Gastrocnemius medialis (tissue), 4 donors: ENCODE measurements at regions of chr3 and their contacts with region 1.

Region 1: GRCh38 chr3:136075218-136075808 is 109.8 kb downstream of the PPP2R3A start:
- DNase-seq: peak; percentile 55 to 73
- ATAC-seq: peak; percentile 82 to 86
- H3K4me3 ChIP-seq: peak overlapping the region in 2 of 4 donors; percentile 10
- H3K27ac ChIP-seq: peak overlapping the region; percentile 69 to 81 (median 78)
- H3K4me1 ChIP-seq: peaks cover 22 to 42% of the 10 kb centered on the region in 2 donors
- H3K27me3 ChIP-seq: no peaks in the 10 kb centered on the region
- CTCF ChIP-seq: peak; percentile 89 to 98 (median 92)
- POLR2A ChIP-seq: no peak

Region 2: GRCh38 chr3:136196401-136197158 is 121.3 kb after region 1 on chr3:
- in situ Hi-C with region 1: no loop called
- intact Hi-C with region 1: loop called (anchors 1 kb)
- DNase-seq: peak; percentile 97 to 99
- ATAC-seq: peak; percentile 78 to 84
- H3K4me3 ChIP-seq: peak overlapping the region; percentile 84 to 95 (median 92)
- H3K27ac ChIP-seq: peak overlapping the region; percentile 91 to 100 (median 100)
- H3K4me1 ChIP-seq: peaks cover 32 to 38% of the 10 kb centered on the region in 2 donors
- H3K27me3 ChIP-seq: no peaks in the 10 kb centered on the region
- CTCF ChIP-seq: no peak
- POLR2A ChIP-seq: peak; percentile 69 to 80

Region 3: GRCh38 chr3:136250226-136250902 is 175.1 kb after region 1 on chr3 and contains the start of gene PCCB:
- in situ Hi-C with region 1: loop called in 2 of 4 experiments (anchors 5 kb)
- intact Hi-C with region 1: loop called (anchors 1 kb)
- DNase-seq: peak; percentile 91 to 95
- ATAC-seq: peak; percentile 91 to 97
- H3K4me3 ChIP-seq: peak within 1 kb of the TSS; percentile 79 to 95 (median 79)
- H3K27ac ChIP-seq: peak within 1 kb of the TSS; percentile 92 to 98 (median 93)
- H3K4me1 ChIP-seq: peaks cover 16 to 20% of the 10 kb centered on the region in 2 donors
- H3K27me3 ChIP-seq: no peaks in the 10 kb centered on the region
- CTCF ChIP-seq: peak; percentile 83 to 97 (median 88)
- POLR2A ChIP-seq: peak; percentile 51 to 58
- total RNA-seq, gene PCCB: 29.8 to 41.4 (median 37.9) TPM

Region 4: DNA sequence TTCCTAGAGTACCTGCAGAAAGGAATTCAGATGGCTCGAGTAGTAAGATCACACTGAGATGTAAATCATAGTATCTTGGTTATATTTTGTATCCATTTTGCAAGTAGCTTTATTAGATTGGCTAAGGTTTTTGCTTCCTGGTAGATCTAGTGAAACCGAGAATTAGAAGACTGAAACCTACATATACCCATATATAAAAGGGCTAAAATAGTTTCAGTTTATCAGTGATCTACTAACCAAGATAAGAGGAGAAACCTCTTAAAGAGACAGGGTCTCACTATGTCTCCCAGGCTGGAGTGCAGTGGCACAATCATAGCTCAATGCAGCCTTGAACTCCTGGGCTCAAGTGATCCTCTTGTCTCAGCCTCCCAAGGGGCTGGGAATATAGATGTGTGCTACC is 310.1 kb after region 1 on chr3:
- in situ Hi-C with region 1: loop called in 1 of 4 experiments (anchors 25 kb)
- intact Hi-C with region 1: no loop called
- DNase-seq: no peak
- ATAC-seq: no peak
- H3K4me3 ChIP-seq: no peak overlapping the region
- H3K27ac ChIP-seq: no peak overlapping the region
- H3K4me1 ChIP-seq: no peaks in the 10 kb centered on the region
- H3K27me3 ChIP-seq: no peaks in the 10 kb centered on the region
- CTCF ChIP-seq: no peak
- POLR2A ChIP-seq: no peak

Region 5: DNA sequence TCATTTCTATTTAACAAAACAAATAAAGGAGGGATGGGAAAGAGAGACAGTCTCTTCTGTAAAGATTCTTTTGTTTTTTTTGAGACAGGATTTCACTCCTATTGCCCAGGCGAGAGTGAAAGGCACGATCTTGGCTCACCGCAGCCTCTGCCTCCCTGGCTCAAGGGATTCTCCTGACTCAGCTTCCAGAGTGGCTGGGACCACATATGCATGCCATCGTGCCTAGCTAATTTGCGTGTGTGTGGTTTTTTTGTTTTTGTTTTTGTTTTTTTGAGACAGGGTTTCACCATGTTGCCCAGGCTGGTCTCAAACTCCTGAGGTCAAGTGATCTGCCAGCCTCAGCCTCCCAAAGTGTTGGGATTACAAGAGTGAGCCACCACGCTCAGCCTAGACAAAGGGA is 653.6 kb after region 1 on chr3:
- in situ Hi-C with region 1: loop called in 1 of 4 experiments (anchors 25 kb)
- intact Hi-C with region 1: no loop called
- DNase-seq: no peak
- ATAC-seq: no peak
- H3K4me3 ChIP-seq: peak overlapping the region in 1 of 4 donors; percentile 12
- H3K27ac ChIP-seq: no peak overlapping the region
- H3K4me1 ChIP-seq: peaks cover 34 to 66% of the 10 kb centered on the region in 2 donors
- H3K27me3 ChIP-seq: no peaks in the 10 kb centered on the region
- CTCF ChIP-seq: no peak
- POLR2A ChIP-seq: no peak

Region 6: DNA sequence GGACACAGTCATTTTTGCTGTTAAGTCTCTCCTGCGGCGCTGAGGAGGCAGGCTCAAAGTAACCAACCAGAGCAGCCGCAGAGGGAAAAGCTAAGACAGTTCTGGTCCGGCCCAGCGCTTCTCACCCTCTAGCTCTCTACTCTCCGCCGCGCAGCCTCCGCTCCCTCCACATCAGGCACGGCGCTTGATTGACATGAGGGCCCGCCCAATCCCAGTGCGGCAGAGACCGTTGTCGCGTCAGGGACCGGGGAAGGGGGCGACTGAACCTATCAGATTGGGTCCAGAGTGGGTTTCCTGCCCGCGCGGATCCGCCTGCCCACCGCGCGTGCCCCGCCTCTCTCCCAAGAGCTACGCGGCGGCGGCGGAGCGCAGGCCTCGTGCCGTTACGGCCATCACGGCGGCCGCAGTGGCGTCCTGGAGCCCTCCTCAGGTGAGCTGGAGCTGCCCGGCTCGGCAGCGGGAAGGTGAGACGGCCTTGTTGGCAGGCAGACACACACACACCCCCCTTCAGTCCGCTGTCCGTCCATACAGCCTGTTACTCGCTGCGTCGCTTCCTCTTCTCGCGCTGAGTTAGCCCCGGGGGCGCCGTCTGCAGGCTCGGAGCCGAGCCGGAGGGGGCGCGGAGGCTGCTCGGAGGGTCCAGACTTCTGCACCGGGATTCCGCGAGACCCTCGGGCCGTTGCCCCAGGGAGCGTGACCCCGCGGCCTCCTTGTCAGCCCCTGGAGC is 786.7 kb after region 1 on chr3 and contains the start of gene NCK1:
- in situ Hi-C with region 1: no loop called
- intact Hi-C with region 1: loop called (anchors 5 kb)
- DNase-seq: peak; percentile 98 to 99
- ATAC-seq: peak; percentile 91 to 92
- H3K4me3 ChIP-seq: peak within 1 kb of the TSS; percentile 79 to 96 (median 86)
- H3K27ac ChIP-seq: peak within 1 kb of the TSS; percentile 88 to 98 (median 94)
- H3K4me1 ChIP-seq: peaks cover 27 to 35% of the 10 kb centered on the region in 2 donors
- H3K27me3 ChIP-seq: no peaks in the 10 kb centered on the region
- CTCF ChIP-seq: peak in 4 of 5 experiments; percentile 11 to 22 (median 15)
- POLR2A ChIP-seq: peak; percentile 95
- total RNA-seq, gene NCK1: 23.5 to 36.6 (median 27.0) TPM

Region 7: GRCh38 chr3:137020315-137020714 is 945.0 kb after region 1 on chr3:
- in situ Hi-C with region 1: loop called in 3 of 4 experiments (anchors 10 kb)
- intact Hi-C with region 1: no loop called
- DNase-seq: no peak
- ATAC-seq: no peak
- H3K4me3 ChIP-seq: no peak overlapping the region
- H3K27ac ChIP-seq: no peak overlapping the region
- H3K4me1 ChIP-seq: no peaks in the 10 kb centered on the region
- H3K27me3 ChIP-seq: no peaks in the 10 kb centered on the region
- CTCF ChIP-seq: no peak
- POLR2A ChIP-seq: no peak

Region 8: DNA sequence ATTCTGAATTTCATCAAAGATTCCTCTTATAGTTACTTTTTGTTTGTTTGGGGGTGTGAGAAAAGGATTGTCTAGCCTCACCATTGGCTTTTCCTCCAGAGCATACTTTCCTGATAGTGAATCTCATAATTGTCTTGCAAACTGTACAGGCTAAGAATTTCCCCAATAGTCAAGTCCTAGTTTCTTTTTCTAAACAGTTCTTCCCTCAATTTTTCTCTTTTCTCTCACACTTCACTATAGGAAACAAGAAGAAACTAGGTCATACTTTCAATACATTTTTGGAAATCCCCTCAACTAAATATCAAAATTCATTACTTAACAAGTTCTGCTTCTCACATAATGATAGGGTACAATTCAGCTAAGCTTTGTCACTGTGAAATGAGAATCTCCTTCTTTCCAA is 1124.4 kb after region 1 on chr3:
- in situ Hi-C with region 1: no loop called
- intact Hi-C with region 1: no loop called
- DNase-seq: no peak
- ATAC-seq: no peak
- H3K4me3 ChIP-seq: no peak overlapping the region
- H3K27ac ChIP-seq: no peak overlapping the region
- H3K4me1 ChIP-seq: no peaks in the 10 kb centered on the region
- H3K27me3 ChIP-seq: no peaks in the 10 kb centered on the region
- CTCF ChIP-seq: no peak
- POLR2A ChIP-seq: no peak